Activated B cell treated with CpG ODN at 0.5 μM for 24 hours (primary cell): ENCODE measurements at regions of chr19 and their contacts with region 1.

Region 1: DNA sequence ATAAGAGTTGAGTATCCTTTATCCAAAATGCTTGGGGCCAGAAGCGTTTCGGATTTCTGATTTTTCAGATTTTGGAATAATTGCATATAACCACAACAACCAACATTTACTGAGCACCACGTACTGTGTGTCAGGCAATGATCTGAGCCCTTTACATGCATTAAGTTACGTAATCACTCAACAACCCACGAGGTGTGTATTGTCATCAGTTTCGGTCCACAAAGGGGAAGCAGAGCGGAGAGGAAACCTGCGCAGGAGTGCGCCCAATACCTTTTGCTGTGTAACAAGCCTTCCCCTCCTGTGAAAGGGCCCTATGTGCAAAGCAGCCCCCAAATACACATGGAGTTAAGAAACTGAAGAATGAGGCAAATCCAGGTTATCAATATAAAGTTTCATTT is 20.7 kb upstream of the NLRP12 start:
- DNase-seq: no peak
- ATAC-seq: no peak
- H3K4me3 Mint-ChIP-seq: no peak overlapping the region
- H3K27ac Mint-ChIP-seq: no peak overlapping the region
- H3K4me1 Mint-ChIP-seq: peaks cover 7% of the 10 kb centered on the region
- H3K27me3 Mint-ChIP-seq: peaks cover 20% of the 10 kb centered on the region
- CTCF ChIP-seq: no peak

Region 2: GRCh38 chr19:53824134-53824611 is 20.7 kb before region 1 on chr19 and contains the start of gene NLRP12:
- CTCF ChIA-PET with region 1: no interaction called
- POLR2A ChIA-PET with region 1: no interaction called
- intact Hi-C with region 1: no loop called
- DNase-seq: no peak
- ATAC-seq: no peak
- H3K4me3 Mint-ChIP-seq: no peak within 1 kb of the TSS
- H3K27ac Mint-ChIP-seq: no peak within 1 kb of the TSS
- H3K4me1 Mint-ChIP-seq: peaks cover 3% of the 10 kb centered on the region
- H3K27me3 Mint-ChIP-seq: peaks cover 16% of the 10 kb centered on the region
- CTCF ChIP-seq: no peak
- total RNA-seq, gene NLRP12: not detected in 2 replicates

Region 3: GRCh38 chr19:53879140-53880081 is 34.6 kb after region 1 on chr19:
- CTCF ChIA-PET with region 1: no interaction called
- POLR2A ChIA-PET with region 1: no interaction called
- intact Hi-C with region 1: loop called (anchors 1 kb)
- DNase-seq: peak; percentile 74
- ATAC-seq: peak; percentile 92
- H3K4me3 Mint-ChIP-seq: no peak overlapping the region
- H3K27ac Mint-ChIP-seq: no peak overlapping the region
- H3K4me1 Mint-ChIP-seq: peaks cover 41% of the 10 kb centered on the region
- H3K27me3 Mint-ChIP-seq: peaks cover 18% of the 10 kb centered on the region
- CTCF ChIP-seq: no peak

Region 4: GRCh38 chr19:53892981-53893325 is 48.1 kb after region 1 on chr19:
- CTCF ChIA-PET with region 1: no interaction called
- POLR2A ChIA-PET with region 1: no interaction called
- intact Hi-C with region 1: no loop called
- DNase-seq: no peak
- ATAC-seq: no peak
- H3K4me3 Mint-ChIP-seq: no peak overlapping the region
- H3K27ac Mint-ChIP-seq: no peak overlapping the region
- H3K4me1 Mint-ChIP-seq: no peaks in the 10 kb centered on the region
- H3K27me3 Mint-ChIP-seq: peaks cover 42% of the 10 kb centered on the region
- CTCF ChIP-seq: no peak

Region 5: GRCh38 chr19:53906211-53907192 is 61.7 kb after region 1 on chr19:
- CTCF ChIA-PET with region 1: no interaction called
- POLR2A ChIA-PET with region 1: no interaction called
- intact Hi-C with region 1: loop called (anchors 2 kb)
- DNase-seq: peak; percentile 57
- ATAC-seq: peak; percentile 67
- H3K4me3 Mint-ChIP-seq: no peak overlapping the region
- H3K27ac Mint-ChIP-seq: no peak overlapping the region
- H3K4me1 Mint-ChIP-seq: peaks cover 23% of the 10 kb centered on the region
- H3K27me3 Mint-ChIP-seq: peaks cover 66% of the 10 kb centered on the region
- CTCF ChIP-seq: no peak

Region 6: GRCh38 chr19:54023191-54023590 is 178.3 kb after region 1 on chr19:
- CTCF ChIA-PET with region 1: interaction called, 13 read pairs
- POLR2A ChIA-PET with region 1: no interaction called
- intact Hi-C with region 1: loop called (anchors 1 kb)
- DNase-seq: no peak
- ATAC-seq: no peak
- H3K4me3 Mint-ChIP-seq: no peak overlapping the region
- H3K27ac Mint-ChIP-seq: no peak overlapping the region
- H3K4me1 Mint-ChIP-seq: peaks cover 6% of the 10 kb centered on the region
- H3K27me3 Mint-ChIP-seq: peaks cover 26% of the 10 kb centered on the region
- CTCF ChIP-seq: no peak

Region 7: GRCh38 chr19:54102421-54103169 is 257.7 kb after region 1 on chr19 and contains the start of gene NDUFA3:
- CTCF ChIA-PET with region 1: no interaction called
- POLR2A ChIA-PET with region 1: no interaction called
- intact Hi-C with region 1: loop called (anchors 2 kb)
- DNase-seq: peak; percentile 93
- ATAC-seq: peak; percentile 97
- H3K4me3 Mint-ChIP-seq: peak within 1 kb of the TSS; percentile 99
- H3K27ac Mint-ChIP-seq: peak within 1 kb of the TSS; percentile 93
- H3K4me1 Mint-ChIP-seq: peaks cover 15% of the 10 kb centered on the region
- H3K27me3 Mint-ChIP-seq: no peaks in the 10 kb centered on the region
- CTCF ChIP-seq: no peak
- total RNA-seq, gene NDUFA3: 94.7 and 96.1 TPM in 2 replicates

Region 8: DNA sequence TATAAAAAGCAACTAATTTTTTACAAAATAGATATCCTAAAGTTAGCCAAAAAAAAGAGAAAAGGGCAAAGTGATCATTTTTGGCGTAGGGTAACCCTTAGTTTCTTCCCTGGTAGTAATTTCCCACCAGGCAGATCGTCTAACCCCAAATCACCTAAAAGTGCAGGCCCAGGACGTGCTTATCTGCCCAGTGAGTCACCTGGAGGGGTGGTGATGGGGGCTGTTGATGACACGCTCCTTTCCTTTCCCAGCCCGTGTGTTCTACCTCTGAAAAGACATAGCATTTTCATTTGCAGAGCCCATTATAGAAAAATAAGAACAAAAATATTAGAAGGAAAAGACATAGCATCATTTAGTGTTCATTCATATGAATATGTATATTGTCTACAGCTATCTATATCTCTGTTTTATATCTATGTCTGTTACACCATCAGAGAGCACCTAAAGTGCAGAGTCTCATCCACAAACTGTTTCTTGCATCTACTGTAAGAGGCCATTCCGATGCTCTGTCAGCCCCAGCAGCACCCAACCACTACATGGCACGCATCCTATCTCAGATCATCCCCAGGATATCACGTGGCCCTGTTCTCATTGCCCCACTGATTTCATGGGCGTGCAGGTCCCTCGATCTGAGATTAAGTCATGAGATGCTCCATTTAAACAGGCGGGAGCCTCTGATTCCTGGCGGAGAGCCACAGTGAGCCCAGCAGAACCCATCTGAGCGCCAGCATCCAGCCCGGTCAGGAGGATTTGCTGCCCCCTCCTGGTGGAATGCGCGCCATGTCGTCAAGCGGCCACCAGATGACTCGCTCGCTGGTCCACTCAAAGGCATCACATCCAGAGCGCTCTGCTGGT is 386.5 kb after region 1 on chr19:
- CTCF ChIA-PET with region 1: no interaction called
- POLR2A ChIA-PET with region 1: no interaction called
- intact Hi-C with region 1: loop called (anchors 2 kb)
- DNase-seq: peak; percentile 73
- ATAC-seq: peak; percentile 96
- H3K4me3 Mint-ChIP-seq: no peak overlapping the region
- H3K27ac Mint-ChIP-seq: no peak overlapping the region
- H3K4me1 Mint-ChIP-seq: peaks cover 6% of the 10 kb centered on the region
- H3K27me3 Mint-ChIP-seq: peaks cover 44% of the 10 kb centered on the region
- CTCF ChIP-seq: no peak